Posterior cingulate gyrus (tissue), 11 donors: ENCODE measurements at regions of chr11 and their contacts with region 1.

Region 1: GRCh38 chr11:119481021-119481666 is 58.2 kb upstream of the THY1 start:
- DNase-seq: peak; percentile 73 to 98 (median 92)

Region 2: DNA sequence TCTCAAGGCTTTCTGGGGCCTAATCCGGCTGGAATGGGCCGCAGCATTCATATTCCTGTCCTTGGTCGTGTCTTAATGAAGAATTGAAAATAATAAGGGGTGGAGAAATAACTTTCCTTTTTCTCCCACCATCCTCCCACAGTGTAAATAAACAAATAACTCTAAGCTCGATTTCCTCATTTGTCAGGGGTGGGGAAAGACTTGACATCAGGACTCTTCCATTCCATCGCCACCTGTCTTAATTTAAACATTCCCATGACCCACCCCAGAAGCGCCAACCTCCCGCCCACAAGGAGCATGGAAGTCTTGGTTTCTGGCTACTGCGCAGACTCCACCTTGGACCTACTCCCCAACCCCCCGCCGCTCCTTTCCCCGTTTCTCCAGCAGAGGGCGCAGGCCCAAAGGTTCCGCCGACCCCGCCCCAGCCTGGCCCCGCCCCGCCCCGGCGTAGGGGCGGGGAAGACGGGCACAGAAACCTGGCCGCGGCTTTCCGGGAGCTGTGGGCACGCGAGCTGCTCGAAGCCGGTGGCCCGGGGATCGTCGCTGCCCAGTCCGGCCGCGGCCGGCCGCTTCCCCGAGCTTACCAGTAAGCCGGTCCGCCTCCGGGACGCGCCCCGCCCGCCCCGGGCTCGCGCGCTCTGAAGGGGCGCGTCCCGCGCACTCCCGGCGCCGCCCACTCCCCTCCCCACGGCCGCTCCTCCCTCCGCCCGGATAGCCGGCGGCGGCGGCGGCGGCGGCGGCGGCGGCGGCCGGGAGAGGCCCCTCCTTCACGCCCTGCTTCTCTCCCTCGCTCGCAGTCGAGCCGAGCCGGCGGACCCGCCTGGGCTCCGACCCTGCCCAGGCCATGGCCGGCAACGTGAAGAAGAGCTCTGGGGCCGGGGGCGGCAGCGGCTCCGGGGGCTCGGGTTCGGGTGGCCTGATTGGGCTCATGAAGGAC is 275.3 kb before region 1 on chr11 and contains the start of gene CBL:
- intact Hi-C with region 1: no loop called
- DNase-seq: peak; percentile 91 to 98 (median 96)

Region 3: DNA sequence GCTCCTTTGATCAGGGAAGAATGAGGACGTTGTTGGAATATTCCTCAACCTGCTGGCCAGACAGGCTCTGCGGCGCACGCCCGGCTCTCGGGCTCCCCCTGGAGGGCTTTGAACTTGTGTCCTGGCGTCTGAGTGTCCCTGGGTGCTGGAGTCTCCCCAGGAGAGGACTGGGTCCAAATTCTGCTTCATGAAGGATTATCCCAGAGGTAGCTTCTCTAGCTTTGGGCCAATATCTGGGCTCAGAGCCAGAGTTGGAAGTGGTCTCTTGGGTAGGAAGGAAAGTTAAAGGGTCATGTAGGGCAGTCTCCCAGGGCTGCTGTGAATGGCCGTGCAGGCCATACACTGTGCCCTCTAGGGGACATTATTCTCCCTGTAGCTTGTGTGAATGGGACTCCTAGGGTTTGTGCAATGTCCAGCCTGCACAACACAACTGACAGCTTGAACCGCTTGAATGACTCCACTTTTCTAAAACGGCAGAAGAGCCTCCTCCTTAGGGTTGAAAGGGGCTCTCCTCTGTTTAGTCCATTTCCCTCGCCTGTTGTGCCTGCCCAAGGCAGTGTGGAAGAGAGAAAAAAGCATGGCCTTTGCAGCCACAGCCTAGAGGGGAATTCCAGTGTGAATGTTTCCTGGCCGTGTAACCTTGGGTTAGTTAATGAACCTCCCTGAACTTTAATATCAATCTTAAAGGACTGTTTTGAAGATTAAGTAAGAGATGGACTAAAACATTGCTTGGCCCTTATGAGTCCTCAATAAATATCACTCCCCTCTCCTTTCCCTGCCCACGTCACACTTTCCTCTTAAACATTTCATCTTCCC is 53.0 kb after region 1 on chr11:
- intact Hi-C with region 1: loop called (anchors 1 kb)
- DNase-seq: peak; percentile 71 to 98 (median 88)

Region 4: DNA sequence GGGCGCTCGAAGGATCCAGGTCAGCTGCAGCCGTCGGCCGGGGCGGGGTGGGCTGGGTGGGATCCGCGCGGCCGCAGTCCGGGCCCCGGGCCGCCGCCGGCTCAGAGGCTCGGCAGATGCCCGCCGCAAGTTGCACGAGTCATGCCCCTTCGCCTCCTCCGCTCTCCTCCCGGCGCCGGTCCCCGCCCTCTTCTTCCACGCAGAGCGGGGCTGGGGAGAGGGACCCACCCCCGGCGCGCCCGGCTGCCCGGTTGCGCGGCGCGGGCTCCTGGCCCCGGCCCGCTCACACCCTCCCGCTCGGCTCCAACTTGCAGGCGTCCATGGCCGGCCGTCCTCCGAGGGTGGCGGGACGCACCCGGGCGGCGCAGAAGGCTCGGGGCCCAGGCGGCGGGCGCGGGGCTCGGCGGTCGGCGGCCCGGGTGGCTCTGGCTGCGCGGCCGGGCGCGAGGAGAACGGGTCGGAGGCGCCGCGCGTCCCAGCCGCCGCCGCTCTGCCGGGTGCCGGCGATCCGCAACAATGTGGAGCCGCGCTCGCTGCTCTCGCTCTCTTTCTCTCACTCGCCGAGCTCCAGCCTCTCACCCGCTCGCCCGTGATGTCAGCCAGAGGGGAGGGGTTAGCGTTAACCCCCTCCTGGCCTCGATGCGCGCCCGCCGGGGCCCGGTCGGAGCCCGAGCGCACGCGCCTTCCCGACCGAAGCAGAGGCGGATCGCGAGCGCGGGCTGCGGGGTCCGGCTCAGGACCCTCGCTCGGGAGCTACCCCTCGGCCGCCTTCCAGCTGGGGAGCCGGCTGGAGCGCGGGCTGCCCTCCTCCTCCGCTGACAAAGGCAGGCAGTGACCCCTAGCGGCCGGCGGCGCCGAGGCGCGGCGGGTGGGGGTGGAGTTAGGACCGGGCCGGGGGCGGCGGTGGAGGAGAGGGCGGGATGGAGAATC is 247.8 kb after region 1 on chr11 and contains the start of gene NECTIN1:
- intact Hi-C with region 1: loop called (anchors 5 kb)
- DNase-seq: peak; percentile 83 to 98 (median 90)

Region 5: GRCh38 chr11:120108154-120108865 is 627.2 kb after region 1 on chr11:
- intact Hi-C with region 1: loop called (anchors 2 kb)
- DNase-seq: peak; percentile 71 to 97 (median 88)

Region 6: GRCh38 chr11:120172054-120172911 is 691.1 kb after region 1 on chr11:
- intact Hi-C with region 1: loop called (anchors 5 kb)
- DNase-seq: peak in 9 of 10 donors; percentile 63 to 96 (median 71)